Activated CD4-positive, alpha-beta memory T cell treated with anti-CD3 and anti-CD28 coated beads for 36 hours (primary cell): ENCODE measurements at regions of chr11 and their contacts with region 1.

Region 1: DNA sequence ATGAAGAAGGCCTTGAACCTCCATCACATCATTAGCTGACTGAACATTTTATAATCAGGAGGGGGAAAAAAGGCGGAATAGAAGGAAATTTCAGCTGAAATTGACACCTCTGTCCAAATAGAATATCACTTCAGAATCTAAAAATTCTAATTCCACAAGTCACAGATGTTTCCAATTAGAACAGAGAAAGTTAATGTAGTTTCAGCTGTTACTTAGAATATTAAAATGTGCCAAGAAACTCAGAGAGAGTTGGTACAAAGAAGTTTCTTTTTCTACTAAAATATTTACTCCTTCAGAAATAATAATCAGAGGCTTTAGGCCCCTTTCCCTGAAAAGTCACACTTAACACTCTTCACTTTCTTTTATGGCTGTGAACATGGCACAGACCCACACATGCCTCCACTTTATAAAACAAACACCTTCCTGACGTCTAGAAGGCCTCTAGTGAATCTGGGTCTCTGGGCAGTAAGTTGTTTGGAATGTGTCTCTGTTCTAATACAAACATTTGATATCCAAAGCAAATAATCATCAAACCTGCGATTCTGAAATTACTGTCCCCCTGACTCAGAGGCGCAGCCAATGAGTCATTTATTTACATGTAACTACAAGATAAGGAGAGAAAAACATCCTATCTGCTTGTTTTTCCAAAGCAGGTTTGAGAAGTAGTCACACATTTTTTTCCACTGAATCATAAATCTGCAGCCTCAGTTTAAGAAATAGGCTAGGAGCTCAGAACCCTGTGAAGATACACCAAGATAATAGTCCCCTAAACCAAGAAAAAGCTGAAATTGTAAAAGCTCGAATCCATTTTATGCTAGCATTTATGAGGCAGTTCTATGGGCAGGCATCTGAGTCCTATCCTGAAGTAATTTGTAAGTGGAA is 148.4 kb downstream of the ME3 start:
- DNase-seq: peak; percentile 22
- H3K4me3 Mint-ChIP-seq: no peak overlapping the region
- H3K27ac Mint-ChIP-seq: no peak overlapping the region
- H3K4me1 Mint-ChIP-seq: peaks cover 10% of the 10 kb centered on the region
- H3K27me3 Mint-ChIP-seq: peaks cover 8% of the 10 kb centered on the region

Region 2: GRCh38 chr11:86511086-86511551 is 12.9 kb before region 1 on chr11:
- CTCF ChIA-PET with region 1: no interaction called
- POLR2A ChIA-PET with region 1: no interaction called
- intact Hi-C with region 1: loop called (anchors 1 kb)
- DNase-seq: no peak
- H3K4me3 Mint-ChIP-seq: no peak overlapping the region
- H3K27ac Mint-ChIP-seq: no peak overlapping the region
- H3K4me1 Mint-ChIP-seq: no peaks in the 10 kb centered on the region
- H3K27me3 Mint-ChIP-seq: no peaks in the 10 kb centered on the region